ENCODE measurements at regions of chr10 and their contacts with region 1.

Region 1: GRCh38 chr10:12902135-12902572 is 99.4 kb downstream of the CCDC3 start:
- DNase-seq: peak; percentile 25 to 84
- H3K4me3 ChIP-seq: no peak overlapping the region
- H3K27ac ChIP-seq: no peak overlapping the region
- H3K4me1 ChIP-seq: peaks cover 0 to 8% (median 2%) of the 10 kb centered on the region in 4 experiments; a peak in 4 of 7 replicates
- H3K27me3 ChIP-seq: no peaks in the 10 kb centered on the region
- CTCF ChIP-seq: peak; percentile 40 to 83 (median 71)
- EP300 ChIP-seq: no peak
- POLR2A ChIP-seq: no peak
- RAD21 ChIP-seq: peak; percentile 80 to 88

Region 2: GRCh38 chr10:12710594-12711349 is 191.4 kb before region 1 on chr10:
- CTCF ChIA-PET with region 1: interaction called, 10 read pairs
- POLR2A ChIA-PET with region 1: no interaction called
- DNase-seq: peak; percentile 43 to 90
- H3K4me3 ChIP-seq: no peak overlapping the region
- H3K27ac ChIP-seq: no peak overlapping the region
- H3K4me1 ChIP-seq: peaks cover 2 to 18% (median 6%) of the 10 kb centered on the region in 4 experiments; a peak in 4 of 7 replicates
- H3K27me3 ChIP-seq: no peaks in the 10 kb centered on the region
- CTCF ChIP-seq: peak; percentile 84 to 94 (median 87)
- EP300 ChIP-seq: no peak
- POLR2A ChIP-seq: no peak
- RAD21 ChIP-seq: peak; percentile 94 to 95

Region 3: DNA sequence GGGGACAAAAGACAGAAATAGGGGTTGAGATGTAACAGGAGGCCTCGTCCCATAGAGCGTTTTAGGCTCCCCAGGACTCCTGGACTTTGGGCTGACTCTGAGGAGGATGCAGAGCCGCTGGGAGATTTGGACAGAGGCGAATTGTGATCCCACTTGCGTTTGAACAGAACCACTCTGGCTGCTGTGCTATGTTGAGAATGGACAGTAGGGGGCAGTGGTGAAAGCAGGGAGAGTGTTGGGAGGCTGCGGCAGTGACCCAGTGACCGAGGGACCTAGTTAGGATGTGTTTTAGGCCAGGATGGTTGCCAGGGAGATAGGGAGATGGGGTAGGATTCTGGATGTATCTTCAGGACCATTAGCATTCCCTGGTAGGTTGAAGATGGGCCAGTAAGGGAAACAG is 172.3 kb before region 1 on chr10:
- CTCF ChIA-PET with region 1: interaction called, 36 read pairs
- POLR2A ChIA-PET with region 1: no interaction called
- DNase-seq: peak; percentile 15 to 88
- H3K4me3 ChIP-seq: no peak overlapping the region
- H3K27ac ChIP-seq: no peak overlapping the region
- H3K4me1 ChIP-seq: peaks cover 0 to 5% (median 1%) of the 10 kb centered on the region in 4 experiments; a peak in 5 of 7 replicates
- H3K27me3 ChIP-seq: no peaks in the 10 kb centered on the region
- CTCF ChIP-seq: peak; percentile 83 to 98 (median 87)
- EP300 ChIP-seq: no peak
- POLR2A ChIP-seq: no peak
- RAD21 ChIP-seq: peak; percentile 88 to 92

Region 4: GRCh38 chr10:12806228-12807095 is 95.7 kb before region 1 on chr10:
- CTCF ChIA-PET with region 1: interaction called, 11 read pairs
- POLR2A ChIA-PET with region 1: no interaction called
- DNase-seq: no peak
- H3K4me3 ChIP-seq: no peak overlapping the region
- H3K27ac ChIP-seq: no peak overlapping the region
- H3K4me1 ChIP-seq: no peaks in the 10 kb centered on the region
- H3K27me3 ChIP-seq: no peaks in the 10 kb centered on the region
- CTCF ChIP-seq: no peak
- EP300 ChIP-seq: no peak
- POLR2A ChIP-seq: no peak
- RAD21 ChIP-seq: no peak

Region 5: GRCh38 chr10:12949248-12949647 is 47.1 kb after region 1 on chr10:
- CTCF ChIA-PET with region 1: interaction called, 14 read pairs
- POLR2A ChIA-PET with region 1: no interaction called
- DNase-seq: peak in 1 of 2 experiments; percentile 52
- H3K4me3 ChIP-seq: no peak overlapping the region
- H3K27ac ChIP-seq: no peak overlapping the region
- H3K4me1 ChIP-seq: no peaks in the 10 kb centered on the region
- H3K27me3 ChIP-seq: no peaks in the 10 kb centered on the region
- CTCF ChIP-seq: peak; percentile 41 to 69 (median 68); a peak in 3 of 4 replicates
- EP300 ChIP-seq: no peak
- POLR2A ChIP-seq: no peak
- RAD21 ChIP-seq: peak; percentile 39 to 47

Region 6: GRCh38 chr10:13074561-13075451 is 172.7 kb after region 1 on chr10:
- CTCF ChIA-PET with region 1: interaction called, 43 read pairs
- POLR2A ChIA-PET with region 1: no interaction called
- DNase-seq: peak; percentile 25 to 83
- H3K4me3 ChIP-seq: no peak overlapping the region
- H3K27ac ChIP-seq: no peak overlapping the region
- H3K4me1 ChIP-seq: peaks cover 0 to under 1% (median under 1%) of the 10 kb centered on the region in 4 experiments; a peak in 2 of 7 replicates
- H3K27me3 ChIP-seq: no peaks in the 10 kb centered on the region
- CTCF ChIP-seq: peak; percentile 88 to 89 (median 89)
- EP300 ChIP-seq: no peak
- POLR2A ChIP-seq: no peak
- RAD21 ChIP-seq: peak; percentile 97

Measured in H1 (cell line).